Testis (tissue), 5 donors: ENCODE measurements at regions of chr4 and their contacts with region 1.

Region 1: DNA sequence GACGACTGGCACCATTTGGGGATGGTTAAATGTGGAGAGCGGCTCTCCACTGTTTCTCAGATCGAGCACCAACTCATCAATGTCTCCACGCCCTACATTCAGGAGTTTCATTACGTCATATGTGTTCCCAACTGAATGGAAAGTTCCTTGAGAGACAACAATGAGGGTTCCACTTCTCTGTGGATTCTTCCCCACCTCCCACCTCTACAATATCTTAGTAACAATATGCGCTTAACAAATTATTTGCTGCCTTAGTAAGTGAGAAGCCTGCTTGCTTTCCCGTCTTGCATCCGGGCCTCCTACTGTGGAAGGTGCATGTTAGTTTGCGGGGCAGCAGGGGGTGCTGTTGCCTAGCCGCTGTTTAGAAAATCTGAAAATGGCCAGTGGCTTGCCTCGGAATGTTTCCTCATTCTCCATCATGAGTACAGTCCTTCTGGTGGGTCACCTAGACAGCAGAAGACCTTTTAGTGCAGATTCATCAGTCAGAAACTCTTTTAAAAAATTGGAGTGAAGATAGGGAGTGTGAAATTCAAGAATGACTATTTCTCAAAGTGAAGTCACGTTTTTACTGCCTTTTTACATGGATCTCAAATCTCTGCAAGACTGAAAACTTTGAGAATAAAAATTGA is 55.7 kb downstream of the PHOX2B start:
- DNase-seq: peak; percentile 76
- H3K4me3 ChIP-seq: no peak overlapping the region
- H3K27ac ChIP-seq: no peak overlapping the region
- H3K4me1 ChIP-seq: no peaks in the 10 kb centered on the region
- H3K27me3 ChIP-seq: no peaks in the 10 kb centered on the region
- CTCF ChIP-seq: peak; percentile 67 to 84 (median 81)
- POLR2A ChIP-seq: no peak

Region 2: GRCh38 chr4:41882625-41883347 is 190.0 kb after region 1 on chr4:
- intact Hi-C with region 1: loop called (anchors 5 kb)
- DNase-seq: peak; percentile 72
- H3K4me3 ChIP-seq: peak overlapping the region; percentile 29 to 36
- H3K27ac ChIP-seq: no peak overlapping the region
- H3K4me1 ChIP-seq: peaks cover 8% of the 10 kb centered on the region
- H3K27me3 ChIP-seq: no peaks in the 10 kb centered on the region
- CTCF ChIP-seq: peak; percentile 43 to 85 (median 59)
- POLR2A ChIP-seq: no peak

Region 3: DNA sequence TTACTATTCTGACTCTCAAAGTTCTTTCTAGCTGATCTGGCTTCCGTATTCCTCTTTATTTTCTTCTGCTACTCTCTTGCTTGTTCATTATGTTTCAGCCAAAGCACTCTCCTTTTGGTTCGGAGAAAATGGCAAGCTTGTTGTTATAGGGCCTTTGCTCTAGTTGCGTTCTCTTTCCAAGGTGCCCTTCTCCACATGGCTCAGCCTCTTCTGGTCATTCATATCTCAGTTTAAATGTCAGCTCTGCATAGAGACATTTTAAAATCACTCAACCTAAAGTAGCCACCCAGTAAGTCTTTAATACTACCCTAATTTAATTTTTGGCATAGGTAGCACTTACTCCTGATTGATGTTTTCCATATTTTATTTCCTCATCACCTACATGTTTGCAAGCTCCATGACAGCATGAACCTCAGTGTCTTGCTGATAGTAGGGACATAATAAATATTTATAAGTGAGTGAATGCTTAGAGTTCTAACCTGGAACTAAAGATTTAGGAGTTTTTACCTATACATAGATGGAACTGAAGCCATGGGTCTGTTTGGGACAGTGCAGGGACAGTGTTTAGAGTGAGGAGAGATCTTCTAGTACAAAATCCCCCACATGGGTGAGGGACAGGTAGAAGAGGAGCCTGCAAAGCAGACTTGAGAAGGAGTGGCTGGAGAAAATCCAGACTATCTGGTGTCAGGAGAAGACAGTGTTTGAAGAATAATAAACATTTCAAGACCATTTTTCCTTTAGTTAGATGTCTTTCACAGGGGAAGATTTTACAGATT is 315.4 kb after region 1 on chr4:
- intact Hi-C with region 1: no loop called
- DNase-seq: no peak
- H3K4me3 ChIP-seq: no peak overlapping the region
- H3K27ac ChIP-seq: no peak overlapping the region
- H3K4me1 ChIP-seq: no peaks in the 10 kb centered on the region
- H3K27me3 ChIP-seq: no peaks in the 10 kb centered on the region
- CTCF ChIP-seq: no peak
- POLR2A ChIP-seq: no peak